ENCODE measurements at regions of chr3 and their contacts with region 1.

Region 1: DNA sequence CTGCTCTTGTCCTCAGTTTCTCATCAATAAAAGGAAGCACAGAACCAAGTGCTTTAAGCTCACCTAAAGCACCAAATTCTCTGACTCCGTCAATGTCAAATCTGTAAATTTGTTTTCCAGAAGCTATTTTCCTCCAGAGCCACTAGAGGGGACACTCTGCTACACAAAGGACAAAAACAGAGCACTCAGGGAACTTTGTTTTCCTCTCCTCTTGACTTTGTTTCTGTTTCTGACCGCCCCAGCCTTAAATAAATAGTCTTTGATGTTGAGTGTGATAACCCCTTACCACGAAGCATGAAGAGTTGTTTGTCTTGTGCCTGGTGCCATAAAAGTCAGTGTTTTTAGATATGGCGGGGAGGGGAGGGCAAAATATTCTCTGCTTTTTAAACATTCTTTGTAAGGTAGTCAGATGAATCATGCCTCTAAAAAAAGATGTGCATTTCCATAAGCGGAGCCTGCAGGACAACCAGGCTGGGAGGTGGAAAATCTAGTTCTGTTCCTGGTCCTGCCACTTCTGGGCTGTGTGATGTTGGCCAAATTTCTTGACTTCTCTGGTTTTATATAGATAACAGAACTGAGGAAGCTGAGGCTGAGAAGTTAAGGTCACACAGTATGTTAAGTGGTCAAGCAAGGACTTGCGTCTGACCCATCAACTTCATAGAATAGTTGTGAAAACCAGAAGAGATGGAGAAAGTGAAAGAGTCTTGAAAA is 7.3 kb upstream of the ZBTB38 start:
- DNase-seq: peak; percentile 98
- ATAC-seq: peak; percentile 97
- H3K4me3 ChIP-seq: peak overlapping the region in 1 of 3 experiments; percentile 24; a peak in 1 of 6 replicates
- H3K27ac ChIP-seq: no peak overlapping the region
- H3K4me1 ChIP-seq: peaks cover 24% of the 10 kb centered on the region
- H3K27me3 ChIP-seq: no peaks in the 10 kb centered on the region
- CTCF ChIP-seq: peak; percentile 89
- EP300 ChIP-seq: peak in 1 of 2 experiments; percentile 95; a peak in 2 of 4 replicates
- POLR2A ChIP-seq: no peak
- RAD21 ChIP-seq: peak; percentile 91

Region 2: GRCh38 chr3:141311496-141312353 is 49.3 kb before region 1 on chr3:
- CTCF ChIA-PET with region 1: interaction called, 6 read pairs
- POLR2A ChIA-PET with region 1: interaction called, 6 read pairs
- in situ Hi-C with region 1: no loop called
- intact Hi-C with region 1: loop called (anchors 2 kb)
- DNase-seq: peak; percentile 96
- ATAC-seq: peak; percentile 92
- H3K4me3 ChIP-seq: peak overlapping the region; percentile 65 to 84 (median 83)
- H3K27ac ChIP-seq: peak overlapping the region; percentile 34
- H3K4me1 ChIP-seq: peaks cover 28% of the 10 kb centered on the region
- H3K27me3 ChIP-seq: no peaks in the 10 kb centered on the region
- CTCF ChIP-seq: peak; percentile 97
- EP300 ChIP-seq: peak in 1 of 2 experiments; percentile 45; a peak in 1 of 4 replicates
- POLR2A ChIP-seq: peak; percentile 71 to 95
- RAD21 ChIP-seq: peak; percentile 93

Region 3: DNA sequence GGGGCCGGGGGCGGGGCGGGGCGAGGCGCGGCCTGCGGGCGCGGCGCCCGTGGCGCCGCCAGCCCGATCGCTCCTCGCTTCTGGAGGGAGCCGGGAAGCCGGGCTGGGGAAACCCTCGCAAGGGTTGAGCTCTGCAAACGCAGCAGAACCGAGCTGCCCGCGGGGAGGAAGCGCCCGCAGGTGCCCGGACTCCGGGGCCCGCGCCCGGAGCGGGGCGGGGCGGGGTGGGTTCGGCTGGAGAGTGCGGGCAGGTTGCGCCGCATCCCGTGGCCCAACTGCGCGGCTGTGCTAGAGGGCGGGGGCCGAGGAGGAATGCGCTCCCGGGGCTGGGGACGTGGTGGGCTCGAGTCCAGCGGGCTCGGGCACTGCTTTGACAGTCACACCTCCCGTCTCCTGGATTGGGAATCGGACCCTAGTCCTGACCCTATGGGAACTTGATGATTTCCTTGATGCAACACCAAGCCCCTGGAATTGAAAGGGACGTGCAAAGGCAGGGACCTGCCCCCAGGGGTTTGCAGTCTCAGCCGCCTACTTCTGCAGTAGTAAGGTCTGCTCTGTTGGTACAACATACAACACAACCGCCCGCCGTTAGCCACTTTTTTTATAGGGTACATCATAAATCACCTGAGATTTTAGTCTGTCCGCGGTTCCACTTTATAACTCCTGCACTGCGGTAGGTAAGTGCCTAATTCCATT is 41.6 kb after region 1 on chr3:
- CTCF ChIA-PET with region 1: interaction called, 3 read pairs
- POLR2A ChIA-PET with region 1: interaction called, 21 read pairs
- in situ Hi-C with region 1: loop called (anchors 5 kb)
- intact Hi-C with region 1: loop called (anchors 2 kb)
- DNase-seq: peak; percentile 33
- ATAC-seq: peak; percentile 77
- H3K4me3 ChIP-seq: peak overlapping the region; percentile 62 to 79 (median 77)
- H3K27ac ChIP-seq: peak overlapping the region; percentile 90
- H3K4me1 ChIP-seq: peaks cover 52% of the 10 kb centered on the region
- H3K27me3 ChIP-seq: no peaks in the 10 kb centered on the region; a peak in 1 of 5 replicates
- CTCF ChIP-seq: no peak
- EP300 ChIP-seq: no peak
- POLR2A ChIP-seq: 0 out of 4 replicates have a peak, but pooled peaks of 1 of the 2 experiments have one; percentile 40
- RAD21 ChIP-seq: no peak

Region 4: GRCh38 chr3:141431411-141432378 is 70.7 kb after region 1 on chr3:
- CTCF ChIA-PET with region 1: no interaction called
- POLR2A ChIA-PET with region 1: interaction called, 39 read pairs
- in situ Hi-C with region 1: no loop called
- intact Hi-C with region 1: loop called (anchors 1 kb)
- DNase-seq: peak; percentile 95
- ATAC-seq: peak; percentile 96
- H3K4me3 ChIP-seq: peak overlapping the region; percentile 46 to 58 (median 58)
- H3K27ac ChIP-seq: peak overlapping the region; percentile 95
- H3K4me1 ChIP-seq: peaks cover 54% of the 10 kb centered on the region
- H3K27me3 ChIP-seq: no peaks in the 10 kb centered on the region
- CTCF ChIP-seq: no peak
- EP300 ChIP-seq: peak; percentile 69 to 91; a peak in 3 of 4 replicates
- POLR2A ChIP-seq: peak in 1 of 2 experiments; percentile 61; a peak in 2 of 4 replicates
- RAD21 ChIP-seq: no peak

Region 5: DNA sequence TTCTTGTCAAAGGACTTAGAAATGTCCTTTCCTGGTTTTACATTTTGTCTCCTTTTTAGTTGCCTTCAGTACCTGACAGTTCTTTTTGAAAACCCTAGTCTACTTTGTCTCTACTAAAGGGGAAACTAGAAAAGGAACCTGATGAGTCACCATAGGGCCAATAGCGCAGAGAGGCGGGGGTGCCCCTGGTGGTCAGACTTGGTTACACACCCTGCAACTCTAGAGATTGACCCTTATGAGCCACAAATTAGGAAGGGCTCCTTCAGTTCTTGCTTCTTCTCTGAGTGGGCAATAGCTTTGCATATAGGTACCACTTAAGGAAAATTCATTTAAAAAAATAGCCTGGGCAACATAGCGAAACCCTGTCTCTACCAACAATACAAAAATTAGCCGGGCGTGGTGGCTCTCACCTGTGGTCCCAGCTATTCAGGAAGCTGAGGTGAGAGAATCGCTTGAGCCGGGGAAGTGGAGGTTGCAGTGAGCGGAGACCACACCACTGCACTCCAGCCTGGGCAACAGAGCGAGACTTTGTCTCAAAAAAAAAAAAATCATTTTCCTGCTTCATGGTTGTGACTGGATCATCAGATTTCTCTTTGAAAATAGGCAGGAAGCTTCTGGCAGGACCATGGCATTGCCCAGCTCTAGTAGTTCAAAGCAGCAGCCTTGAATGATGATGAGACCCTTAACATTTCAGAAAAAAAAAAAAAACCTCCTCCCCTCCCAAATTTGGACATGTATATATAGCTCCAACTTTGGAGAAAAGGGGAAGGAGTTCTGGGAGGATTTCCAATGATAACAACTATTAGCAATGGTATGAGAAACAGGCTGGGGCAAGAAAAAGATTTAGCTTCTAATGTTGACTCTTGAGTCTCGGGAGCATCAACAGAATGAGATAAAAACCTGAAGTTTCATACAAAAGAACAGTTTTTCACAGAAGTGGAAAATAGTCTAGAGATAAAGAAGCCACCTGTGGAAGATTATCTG is 80.6 kb after region 1 on chr3:
- CTCF ChIA-PET with region 1: interaction called, 23 read pairs
- POLR2A ChIA-PET with region 1: interaction called, 6 read pairs
- in situ Hi-C with region 1: no loop called
- intact Hi-C with region 1: loop called (anchors 1 kb)
- DNase-seq: peak; percentile 57
- ATAC-seq: peak; percentile 98
- H3K4me3 ChIP-seq: no peak overlapping the region
- H3K27ac ChIP-seq: peak overlapping the region; percentile 66
- H3K4me1 ChIP-seq: peaks cover 32% of the 10 kb centered on the region
- H3K27me3 ChIP-seq: no peaks in the 10 kb centered on the region
- CTCF ChIP-seq: peak; percentile 81
- EP300 ChIP-seq: no peak
- POLR2A ChIP-seq: no peak
- RAD21 ChIP-seq: peak; percentile 58

Region 6: DNA sequence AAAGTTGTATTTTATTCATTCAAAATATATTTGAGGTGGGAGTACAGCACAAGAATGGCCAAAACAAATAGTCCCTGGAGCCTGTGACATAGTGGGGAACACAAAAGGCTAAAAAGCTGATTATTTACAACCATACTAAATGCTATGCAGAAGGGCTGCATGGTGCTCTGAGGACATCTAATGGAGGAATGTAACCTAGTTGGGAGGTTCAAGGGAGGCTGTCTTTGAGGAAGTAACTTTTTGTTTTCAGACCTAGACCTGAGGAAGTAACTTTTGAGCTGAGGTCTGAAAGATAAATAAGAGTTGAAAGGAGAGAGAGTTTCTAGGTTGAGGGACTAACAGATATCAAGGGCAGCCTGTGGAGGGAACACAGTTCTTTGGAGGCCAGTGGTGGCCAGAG is 91.0 kb after region 1 on chr3:
- CTCF ChIA-PET with region 1: interaction called, 15 read pairs
- POLR2A ChIA-PET with region 1: interaction called, 7 read pairs
- in situ Hi-C with region 1: loop called (anchors 5 kb)
- intact Hi-C with region 1: no loop called
- DNase-seq: peak; percentile 59
- ATAC-seq: peak; percentile 67
- H3K4me3 ChIP-seq: no peak overlapping the region
- H3K27ac ChIP-seq: no peak overlapping the region
- H3K4me1 ChIP-seq: peaks cover 45% of the 10 kb centered on the region
- H3K27me3 ChIP-seq: no peaks in the 10 kb centered on the region
- CTCF ChIP-seq: peak; percentile 84
- EP300 ChIP-seq: no peak
- POLR2A ChIP-seq: no peak
- RAD21 ChIP-seq: peak; percentile 65